ENCODE measurements at regions of chr1 and their contacts with region 1.

Region 1: GRCh38 chr1:240888039-240888786 is 276.3 kb upstream of the GREM2 start:
- DNase-seq: peak; percentile 36
- ATAC-seq: peak; percentile 56; the same call in 1 of the 2 replicates
- H3K4me3 ChIP-seq: no peak overlapping the region
- H3K27ac ChIP-seq: no peak overlapping the region
- H3K4me1 ChIP-seq: no peaks in the 10 kb centered on the region
- H3K27me3 ChIP-seq: no peaks in the 10 kb centered on the region
- CTCF ChIP-seq: peak; percentile 86

Region 2: DNA sequence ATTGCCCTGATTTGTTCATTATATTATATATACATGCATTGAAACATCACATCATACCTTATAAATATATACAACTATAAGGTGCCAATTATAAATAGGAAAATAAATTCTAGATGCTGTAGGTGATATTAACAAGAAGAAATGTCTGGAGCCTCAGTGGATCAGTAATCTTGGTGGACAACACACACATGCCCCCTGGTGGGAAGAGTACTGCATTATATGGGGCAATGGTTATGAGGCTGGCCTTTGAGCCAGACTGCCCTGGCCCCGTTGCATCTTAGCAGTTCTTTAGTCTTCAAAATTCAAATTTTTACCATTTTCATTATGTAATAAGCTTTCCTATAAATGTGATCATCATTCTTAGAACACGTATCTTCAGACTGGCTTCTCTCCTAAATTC is 58.7 kb after region 1 on chr1:
- CTCF ChIA-PET with region 1: no interaction called
- POLR2A ChIA-PET with region 1: no interaction called
- in situ Hi-C with region 1: no loop called
- intact Hi-C with region 1: loop called (anchors 2 kb)
- DNase-seq: no peak
- ATAC-seq: peak; percentile 85; the same call in 1 of the 2 replicates
- H3K4me3 ChIP-seq: no peak overlapping the region
- H3K27ac ChIP-seq: no peak overlapping the region
- H3K4me1 ChIP-seq: no peaks in the 10 kb centered on the region
- H3K27me3 ChIP-seq: no peaks in the 10 kb centered on the region
- CTCF ChIP-seq: peak; percentile 69

Region 3: DNA sequence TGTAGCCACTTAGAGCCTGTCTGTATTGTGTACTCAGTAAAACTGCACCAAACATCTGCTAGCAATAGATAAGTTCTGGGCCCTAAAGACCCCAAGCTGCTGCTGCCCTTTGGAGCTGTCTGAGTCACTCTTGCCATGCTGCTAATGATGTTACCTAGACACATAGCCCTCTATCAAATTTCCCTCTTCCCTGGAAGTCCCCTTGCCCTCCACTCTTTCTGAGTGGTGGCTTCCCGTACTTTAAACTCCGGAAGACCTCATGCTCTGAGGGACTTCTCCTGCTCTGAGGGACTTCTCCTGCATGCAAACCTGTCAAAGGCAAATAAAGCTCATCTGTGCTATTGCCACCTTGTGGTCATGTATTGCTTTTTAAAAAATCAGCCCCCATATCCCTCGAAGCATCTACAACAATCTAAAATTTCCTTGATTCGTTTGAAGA is 597.4 kb after region 1 on chr1:
- CTCF ChIA-PET with region 1: no interaction called
- POLR2A ChIA-PET with region 1: no interaction called
- in situ Hi-C with region 1: no loop called
- intact Hi-C with region 1: loop called (anchors 5 kb)
- DNase-seq: no peak
- ATAC-seq: peak; percentile 60; the same call in 1 of the 2 replicates
- H3K4me3 ChIP-seq: no peak overlapping the region
- H3K27ac ChIP-seq: no peak overlapping the region
- H3K4me1 ChIP-seq: no peaks in the 10 kb centered on the region; the same call in 1 of the 2 replicates
- H3K27me3 ChIP-seq: no peaks in the 10 kb centered on the region
- CTCF ChIP-seq: peak; percentile 66

Measured in Panc1 (cell line).